Activated B cell treated with CpG ODN at 0.5 μM for 24 hours (primary cell): ENCODE measurements at regions of chr7 and their contacts with region 1.

Region 1: GRCh38 chr7:111238886-111239285 is 148.0 kb downstream of the LRRN3 start:
- DNase-seq: no peak
- ATAC-seq: no peak
- H3K4me3 Mint-ChIP-seq: no peak overlapping the region
- H3K27ac Mint-ChIP-seq: no peak overlapping the region
- H3K4me1 Mint-ChIP-seq: peaks cover 16% of the 10 kb centered on the region
- H3K27me3 Mint-ChIP-seq: no peaks in the 10 kb centered on the region
- CTCF ChIP-seq: no peak

Region 2: GRCh38 chr7:111324228-111324627 is 85.3 kb after region 1 on chr7:
- CTCF ChIA-PET with region 1: no interaction called
- POLR2A ChIA-PET with region 1: no interaction called
- intact Hi-C with region 1: loop called (anchors 5 kb)
- DNase-seq: no peak
- ATAC-seq: peak; percentile 71
- H3K4me3 Mint-ChIP-seq: peak overlapping the region; percentile 19
- H3K27ac Mint-ChIP-seq: peak overlapping the region; percentile 66
- H3K4me1 Mint-ChIP-seq: peaks cover 38% of the 10 kb centered on the region
- H3K27me3 Mint-ChIP-seq: no peaks in the 10 kb centered on the region
- CTCF ChIP-seq: no peak

Region 3: DNA sequence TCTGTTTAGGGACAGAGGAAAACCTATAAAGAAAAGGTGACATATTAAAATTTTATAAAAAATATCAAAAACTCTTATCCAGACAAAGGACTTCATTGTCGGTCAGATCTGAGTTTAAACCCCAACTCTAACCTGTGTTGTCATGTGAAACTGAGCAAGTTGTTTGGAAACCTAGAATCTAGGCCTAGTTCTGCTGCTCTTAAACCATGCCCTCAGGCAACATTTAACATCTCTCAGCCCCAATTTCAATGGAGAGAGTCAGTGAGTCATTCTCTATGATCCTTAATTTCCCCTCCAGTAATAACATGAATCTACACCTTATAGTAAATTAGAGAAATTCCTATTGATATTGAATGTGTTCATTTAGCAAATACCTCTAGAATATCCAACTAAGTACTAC is 131.1 kb after region 1 on chr7:
- CTCF ChIA-PET with region 1: no interaction called
- POLR2A ChIA-PET with region 1: no interaction called
- intact Hi-C with region 1: no loop called
- DNase-seq: no peak
- ATAC-seq: no peak
- H3K4me3 Mint-ChIP-seq: no peak overlapping the region
- H3K27ac Mint-ChIP-seq: no peak overlapping the region
- H3K4me1 Mint-ChIP-seq: no peaks in the 10 kb centered on the region
- H3K27me3 Mint-ChIP-seq: no peaks in the 10 kb centered on the region
- CTCF ChIP-seq: no peak